A549 (cell line): ENCODE measurements at regions of chr6 and their contacts with region 1.

Region 1: GRCh38 chr6:43143235-43144124 is 27.6 kb upstream of the SRF start:
- DNase-seq: peak; percentile 59 to 78
- ATAC-seq: peak; percentile 95 to 99
- H3K4me3 ChIP-seq: no peak overlapping the region
- H3K27ac ChIP-seq: peak overlapping the region in 1 of 2 experiments; percentile 44; a peak in 2 of 6 replicates
- H3K4me1 ChIP-seq: peaks cover 8% of the 10 kb centered on the region; the same call in 1 of the 3 replicates
- CTCF ChIP-seq: peak; percentile 76
- EP300 ChIP-seq: no peak
- POLR2A ChIP-seq: no peak
- RAD21 ChIP-seq: peak; percentile 86 to 88

Region 2: GRCh38 chr6:42911171-42912021 is 232.1 kb before region 1 on chr6:
- CTCF ChIA-PET with region 1: interaction called, 11 read pairs
- POLR2A ChIA-PET with region 1: no interaction called
- DNase-seq: no peak
- ATAC-seq: no peak
- H3K4me3 ChIP-seq: no peak overlapping the region
- H3K27ac ChIP-seq: no peak overlapping the region
- H3K4me1 ChIP-seq: no peaks in the 10 kb centered on the region
- CTCF ChIP-seq: no peak
- EP300 ChIP-seq: no peak
- POLR2A ChIP-seq: no peak
- RAD21 ChIP-seq: no peak

Region 3: DNA sequence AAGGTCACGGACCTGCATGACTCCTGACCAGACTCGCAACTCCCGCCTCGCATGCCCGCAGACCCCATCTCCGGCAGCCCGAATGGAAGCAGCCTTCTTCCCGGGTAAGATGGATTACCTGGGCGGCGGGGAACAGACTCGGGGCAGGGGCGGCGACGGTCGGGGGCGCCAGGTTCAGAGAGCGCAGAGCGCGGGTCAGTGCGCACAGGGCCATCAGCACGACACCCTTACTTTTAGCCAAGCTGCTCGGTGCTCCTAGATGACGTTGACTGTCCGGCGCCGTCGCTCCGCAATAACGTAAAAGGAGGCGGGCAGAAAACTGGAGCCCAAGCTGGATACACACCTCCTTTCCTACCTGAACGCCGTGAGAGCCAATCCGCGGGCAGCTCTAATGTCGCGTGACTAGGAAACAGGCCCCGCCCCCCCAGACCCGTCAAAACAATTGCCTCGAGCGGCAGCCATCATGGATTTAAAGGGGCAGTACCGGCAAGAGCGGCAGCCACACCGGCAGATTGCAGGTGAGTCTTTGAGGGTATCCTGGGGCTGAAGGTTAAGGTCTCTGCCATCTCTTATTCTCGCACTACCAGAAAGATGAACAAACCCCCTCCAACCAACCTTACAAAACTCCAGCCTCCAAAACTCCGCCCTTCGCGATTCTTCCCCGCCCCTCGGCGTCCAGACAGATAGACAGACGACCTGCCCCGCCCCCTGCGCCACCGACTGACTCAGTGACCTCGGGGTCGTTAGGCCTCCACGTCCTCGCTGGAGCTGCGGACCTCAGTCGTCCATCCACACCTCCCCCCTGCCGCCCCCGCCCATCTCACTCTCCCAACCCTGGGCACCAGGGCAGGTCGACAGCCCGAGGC is 84.1 kb before region 1 on chr6 and contains the starts of genes KLC4 and MRPL2:
- CTCF ChIA-PET with region 1: interaction called, 13 read pairs
- POLR2A ChIA-PET with region 1: interaction called, 6 read pairs
- DNase-seq: peak; percentile 97 to 98
- ATAC-seq: peak; percentile 88 to 96
- H3K4me3 ChIP-seq: peak within 1 kb of the TSS; percentile 100
- H3K27ac ChIP-seq: peak within 1 kb of the TSS; percentile 90 to 97
- H3K4me1 ChIP-seq: peaks cover 14% of the 10 kb centered on the region
- CTCF ChIP-seq: no peak
- EP300 ChIP-seq: no peak
- POLR2A ChIP-seq: peak; percentile 85
- RAD21 ChIP-seq: no peak
- polyA plus RNA-seq, gene KLC4: 8.4 and 10.0 TPM in 2 replicates
- polyA plus RNA-seq, gene MRPL2: 20.9 and 33.7 TPM in 2 replicates

Region 4: GRCh38 chr6:43113431-43114260 is 29.8 kb before region 1 on chr6:
- CTCF ChIA-PET with region 1: interaction called, 11 read pairs
- POLR2A ChIA-PET with region 1: no interaction called
- DNase-seq: no peak
- ATAC-seq: no peak
- H3K4me3 ChIP-seq: no peak overlapping the region
- H3K27ac ChIP-seq: no peak overlapping the region
- H3K4me1 ChIP-seq: no peaks in the 10 kb centered on the region
- CTCF ChIP-seq: no peak
- EP300 ChIP-seq: no peak
- POLR2A ChIP-seq: no peak
- RAD21 ChIP-seq: no peak

Region 5: DNA sequence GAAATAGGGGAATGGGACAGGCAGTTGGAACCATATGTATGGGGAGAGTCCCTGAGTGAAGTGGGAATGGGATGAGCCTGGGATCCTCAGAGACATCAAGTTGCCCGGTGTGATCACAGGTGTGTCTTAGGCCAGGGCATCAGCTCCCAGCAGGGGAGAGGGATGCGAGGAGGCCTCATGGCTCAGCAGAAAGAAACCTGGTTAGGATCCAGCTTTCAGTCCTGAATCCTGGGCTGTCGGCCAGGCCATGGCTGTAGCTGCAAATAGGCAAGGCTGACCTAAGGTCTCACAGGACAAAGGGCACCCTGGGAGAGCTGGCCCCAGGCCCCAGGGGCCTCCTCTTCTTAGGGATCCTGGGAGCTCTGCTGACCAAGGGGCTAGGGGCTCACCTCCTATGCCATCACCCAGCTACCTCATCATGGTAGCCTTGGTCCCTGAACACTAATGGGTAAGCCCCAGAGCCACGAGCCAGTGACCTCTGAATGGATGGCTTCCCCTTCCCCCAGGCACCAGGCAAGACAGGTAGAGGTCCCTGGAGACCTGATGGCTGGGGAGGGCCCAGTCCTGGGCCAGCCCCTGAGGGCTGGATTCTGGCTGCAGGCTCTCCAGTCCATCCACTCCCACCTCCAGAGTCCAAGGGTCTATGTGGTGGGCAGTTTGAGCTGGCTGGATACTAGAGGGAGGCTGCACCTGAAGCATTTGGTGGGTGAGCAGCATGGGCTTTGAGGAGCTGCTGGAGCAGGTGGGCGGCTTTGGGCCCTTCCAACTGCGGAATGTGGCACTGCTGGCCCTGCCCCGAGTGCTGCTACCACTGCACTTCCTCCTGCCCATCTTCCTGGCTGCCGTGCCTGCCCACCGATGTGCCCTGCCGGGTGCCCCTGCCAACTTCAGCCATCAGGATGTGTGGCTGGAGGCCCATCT is 154.4 kb after region 1 on chr6 and contains the start of gene SLC22A7:
- CTCF ChIA-PET with region 1: no interaction called
- POLR2A ChIA-PET with region 1: no interaction called
- DNase-seq: no peak
- ATAC-seq: no peak
- H3K4me3 ChIP-seq: no peak within 1 kb of the TSS
- H3K27ac ChIP-seq: no peak within 1 kb of the TSS
- H3K4me1 ChIP-seq: 0 out of 3 replicates have a peak, but pooled peaks cover 3% of the 10 kb centered on the region
- CTCF ChIP-seq: no peak
- EP300 ChIP-seq: no peak
- POLR2A ChIP-seq: no peak
- RAD21 ChIP-seq: no peak
- polyA plus RNA-seq, gene SLC22A7: not detected in 2 replicates